HCT116 (cell line): ENCODE measurements at regions of chr11 and their contacts with region 1.

Region 1: GRCh38 chr11:58513747-58514367 is 6.0 kb upstream of the OR5B21 start:
- DNase-seq: peak; percentile 64
- ATAC-seq: peak; percentile 96
- H3K4me3 ChIP-seq: no peak overlapping the region
- H3K27ac ChIP-seq: no peak overlapping the region
- H3K4me1 ChIP-seq: no peaks in the 10 kb centered on the region
- H3K27me3 ChIP-seq: 0 out of 2 replicates have a peak, but pooled peaks cover 9% of the 10 kb centered on the region
- CTCF ChIP-seq: peak; percentile 70 to 83 (median 75)
- POLR2A ChIP-seq: no peak
- RAD21 ChIP-seq: peak; percentile 91

Region 2: GRCh38 chr11:57345555-57346211 is 1168.2 kb before region 1 on chr11:
- CTCF ChIA-PET with region 1: interaction called, 5 read pairs
- POLR2A ChIA-PET with region 1: no interaction called
- RAD21 ChIA-PET with region 1: no interaction called
- intact Hi-C with region 1: loop called (anchors 2 kb)
- DNase-seq: peak; percentile 76
- ATAC-seq: peak; percentile 84
- H3K4me3 ChIP-seq: no peak overlapping the region
- H3K27ac ChIP-seq: no peak overlapping the region
- H3K4me1 ChIP-seq: peaks cover 3 to 19% of the 10 kb centered on the region in 2 experiments; a peak in 3 of 4 replicates
- H3K27me3 ChIP-seq: no peaks in the 10 kb centered on the region
- CTCF ChIP-seq: peak; percentile 44 to 69 (median 67); a peak in 5 of 6 replicates
- POLR2A ChIP-seq: no peak
- RAD21 ChIP-seq: peak; percentile 74

Region 3: GRCh38 chr11:57530596-57531507 is 983.0 kb before region 1 on chr11 and contains the start of gene TIMM10:
- CTCF ChIA-PET with region 1: no interaction called
- POLR2A ChIA-PET with region 1: no interaction called
- RAD21 ChIA-PET with region 1: no interaction called
- intact Hi-C with region 1: loop called (anchors 5 kb)
- DNase-seq: peak; percentile 99
- ATAC-seq: peak; percentile 95
- H3K4me3 ChIP-seq: peak within 1 kb of the TSS; percentile 64 to 84
- H3K27ac ChIP-seq: peak within 1 kb of the TSS; percentile 61
- H3K4me1 ChIP-seq: peaks cover 16 to 17% of the 10 kb centered on the region in 2 experiments
- H3K27me3 ChIP-seq: no peaks in the 10 kb centered on the region
- CTCF ChIP-seq: no peak
- POLR2A ChIP-seq: peak; percentile 75
- RAD21 ChIP-seq: peak; percentile 16; the same call in 1 of the 2 replicates
- total RNA-seq, gene TIMM10: 65.6 TPM

Region 4: DNA sequence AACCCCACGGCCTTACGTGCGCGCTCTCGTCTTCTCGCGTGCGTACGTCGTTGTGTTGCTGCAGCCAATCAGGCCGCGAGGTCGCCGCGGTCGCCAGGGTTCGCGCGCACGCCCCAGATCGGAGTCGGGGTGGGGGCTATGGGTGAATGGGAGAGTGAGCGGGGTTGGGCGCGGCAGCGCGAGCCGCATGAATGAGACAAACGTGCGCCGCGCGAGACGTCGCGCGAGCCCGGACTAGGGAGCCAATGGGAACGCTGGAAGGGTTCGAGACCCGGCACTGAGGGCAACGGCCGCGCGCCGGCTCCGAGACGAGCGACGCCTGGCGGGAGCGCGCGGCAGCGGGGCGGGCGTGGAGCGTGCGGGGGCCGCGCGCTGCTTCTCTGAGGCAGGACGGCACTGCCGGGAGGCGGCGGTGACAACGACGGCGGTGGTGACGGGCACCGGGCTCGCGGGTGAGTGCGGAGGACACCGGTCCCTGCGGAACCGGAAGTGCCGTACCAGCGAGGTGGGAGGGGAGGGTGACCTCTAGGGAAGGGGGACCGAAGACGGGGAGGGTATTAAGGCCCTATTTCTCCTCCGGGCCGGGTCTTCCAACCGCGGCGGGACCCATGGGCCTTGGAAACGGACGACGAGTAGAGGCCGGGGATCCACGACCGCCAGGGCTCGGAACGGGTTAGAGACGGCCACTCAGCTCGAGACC is 846.0 kb before region 1 on chr11 and contains the start of gene ZDHHC5:
- CTCF ChIA-PET with region 1: no interaction called
- POLR2A ChIA-PET with region 1: no interaction called
- RAD21 ChIA-PET with region 1: no interaction called
- intact Hi-C with region 1: loop called (anchors 1 kb)
- DNase-seq: peak; percentile 99
- ATAC-seq: peak; percentile 90
- H3K4me3 ChIP-seq: peak within 1 kb of the TSS; percentile 85 to 97
- H3K27ac ChIP-seq: peak within 1 kb of the TSS; percentile 93
- H3K4me1 ChIP-seq: peaks cover 9 to 19% of the 10 kb centered on the region in 2 experiments
- H3K27me3 ChIP-seq: no peaks in the 10 kb centered on the region
- CTCF ChIP-seq: peak in 2 of 3 experiments; percentile 39 to 41; a peak in 3 of 6 replicates
- POLR2A ChIP-seq: peak; percentile 58
- RAD21 ChIP-seq: no peak
- total RNA-seq, gene ZDHHC5: 64.1 TPM

Region 5: DNA sequence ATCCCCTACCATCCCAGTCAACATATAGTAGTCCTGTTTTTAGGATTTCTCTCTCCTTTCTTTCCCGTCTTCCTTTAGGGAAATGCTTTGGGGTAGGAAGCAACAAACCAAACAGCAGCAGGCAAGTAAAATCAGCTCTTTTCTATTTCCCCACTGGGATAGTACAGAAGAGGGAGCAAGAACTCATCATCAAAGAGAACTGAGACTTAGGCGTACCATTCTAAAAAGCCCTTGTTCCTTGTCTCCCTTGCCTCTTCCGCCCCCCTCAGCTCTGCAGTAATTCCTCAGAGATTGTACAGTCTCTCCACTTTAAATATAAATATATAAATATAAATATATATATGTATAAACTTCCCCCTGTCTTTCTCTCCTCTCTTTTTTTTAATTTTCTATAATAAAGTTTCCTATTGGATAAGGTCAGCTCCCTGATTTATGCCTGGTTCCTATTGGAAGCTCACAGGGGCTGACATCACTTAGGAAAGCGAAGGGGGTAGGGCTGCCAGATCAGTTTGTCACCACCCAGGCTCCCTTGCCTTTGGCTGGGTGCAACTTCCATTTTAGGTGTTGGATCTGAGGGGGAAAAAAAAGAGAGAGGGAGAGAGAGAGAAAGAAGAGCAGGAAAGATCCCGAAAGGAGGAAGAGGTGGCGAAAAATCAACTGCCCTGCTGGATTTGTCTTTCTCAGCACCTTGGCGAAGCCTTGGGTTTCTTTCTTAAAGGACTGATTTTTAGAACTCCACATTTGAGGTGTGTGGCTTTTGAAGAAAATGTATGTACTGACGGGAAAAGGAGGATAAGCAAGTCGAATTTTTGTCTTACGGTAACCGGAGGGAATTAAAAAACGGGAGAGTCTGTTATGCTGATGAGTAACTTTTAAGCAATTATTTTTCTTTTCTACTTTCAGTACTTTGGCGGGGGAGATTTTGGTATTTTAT is 752.3 kb before region 1 on chr11 and contains the start of gene CTNND1:
- CTCF ChIA-PET with region 1: no interaction called
- POLR2A ChIA-PET with region 1: no interaction called
- RAD21 ChIA-PET with region 1: no interaction called
- intact Hi-C with region 1: loop called (anchors 5 kb)
- DNase-seq: peak; percentile 95
- ATAC-seq: peak; percentile 97
- H3K4me3 ChIP-seq: peak within 1 kb of the TSS; percentile 81 to 93
- H3K27ac ChIP-seq: peak within 1 kb of the TSS; percentile 83
- H3K4me1 ChIP-seq: peaks cover 15 to 28% of the 10 kb centered on the region in 2 experiments; a peak in 3 of 4 replicates
- H3K27me3 ChIP-seq: no peaks in the 10 kb centered on the region
- CTCF ChIP-seq: 0 out of 6 replicates have a peak, but pooled peaks of 1 of the 3 experiments have one; percentile 3
- POLR2A ChIP-seq: peak; percentile 78
- RAD21 ChIP-seq: peak; percentile 15
- total RNA-seq, gene CTNND1: 157 TPM

Region 6: GRCh38 chr11:58259985-58260384 is 253.9 kb before region 1 on chr11:
- CTCF ChIA-PET with region 1: no interaction called
- POLR2A ChIA-PET with region 1: no interaction called
- RAD21 ChIA-PET with region 1: no interaction called
- intact Hi-C with region 1: no loop called
- DNase-seq: no peak
- ATAC-seq: no peak
- H3K4me3 ChIP-seq: no peak overlapping the region
- H3K27ac ChIP-seq: no peak overlapping the region
- H3K4me1 ChIP-seq: no peaks in the 10 kb centered on the region
- H3K27me3 ChIP-seq: peaks cover 10% of the 10 kb centered on the region
- CTCF ChIP-seq: no peak
- POLR2A ChIP-seq: no peak
- RAD21 ChIP-seq: no peak

Region 7: GRCh38 chr11:58524232-58525036 is 10.6 kb after region 1 on chr11:
- CTCF ChIA-PET with region 1: interaction called, 15 read pairs
- POLR2A ChIA-PET with region 1: no interaction called
- RAD21 ChIA-PET with region 1: no interaction called
- intact Hi-C with region 1: no loop called
- DNase-seq: peak; percentile 71
- ATAC-seq: peak; percentile 98
- H3K4me3 ChIP-seq: peak overlapping the region in 1 of 2 experiments; percentile 2; a peak in 1 of 4 replicates
- H3K27ac ChIP-seq: no peak overlapping the region
- H3K4me1 ChIP-seq: peaks cover 0 to 8% of the 10 kb centered on the region in 2 experiments; a peak in 3 of 4 replicates
- H3K27me3 ChIP-seq: 0 out of 2 replicates have a peak, but pooled peaks cover 4% of the 10 kb centered on the region
- CTCF ChIP-seq: peak; percentile 67 to 99 (median 78)
- POLR2A ChIP-seq: no peak
- RAD21 ChIP-seq: peak; percentile 64

Region 8: DNA sequence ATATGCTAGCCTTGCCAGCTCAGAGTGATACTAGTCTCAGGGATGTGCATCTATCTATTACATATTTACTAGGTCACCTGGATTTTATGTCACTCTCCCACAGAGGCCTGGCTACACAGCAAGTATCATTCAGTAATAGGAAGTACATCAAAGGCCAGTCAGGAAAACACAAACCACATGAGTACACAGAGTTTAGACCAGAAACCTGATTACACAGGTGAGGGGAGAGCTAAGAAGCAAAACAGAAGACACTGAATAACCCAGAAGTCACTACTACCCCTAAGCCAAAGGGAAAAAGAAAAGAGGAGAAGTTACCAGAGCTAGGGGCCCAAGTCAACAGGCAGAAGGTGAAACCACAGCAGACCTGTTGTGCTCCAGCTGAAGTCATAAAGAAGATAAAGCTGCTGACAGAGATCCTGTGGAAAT is 48.5 kb after region 1 on chr11:
- CTCF ChIA-PET with region 1: no interaction called
- POLR2A ChIA-PET with region 1: no interaction called
- RAD21 ChIA-PET with region 1: no interaction called
- intact Hi-C with region 1: no loop called
- DNase-seq: no peak
- ATAC-seq: no peak
- H3K4me3 ChIP-seq: no peak overlapping the region
- H3K27ac ChIP-seq: no peak overlapping the region
- H3K4me1 ChIP-seq: no peaks in the 10 kb centered on the region
- H3K27me3 ChIP-seq: no peaks in the 10 kb centered on the region
- CTCF ChIP-seq: no peak
- POLR2A ChIP-seq: no peak
- RAD21 ChIP-seq: no peak